Heart right ventricle (tissue), 16 donors: ENCODE measurements at regions of chr2 and their contacts with region 1.

Region 1: DNA sequence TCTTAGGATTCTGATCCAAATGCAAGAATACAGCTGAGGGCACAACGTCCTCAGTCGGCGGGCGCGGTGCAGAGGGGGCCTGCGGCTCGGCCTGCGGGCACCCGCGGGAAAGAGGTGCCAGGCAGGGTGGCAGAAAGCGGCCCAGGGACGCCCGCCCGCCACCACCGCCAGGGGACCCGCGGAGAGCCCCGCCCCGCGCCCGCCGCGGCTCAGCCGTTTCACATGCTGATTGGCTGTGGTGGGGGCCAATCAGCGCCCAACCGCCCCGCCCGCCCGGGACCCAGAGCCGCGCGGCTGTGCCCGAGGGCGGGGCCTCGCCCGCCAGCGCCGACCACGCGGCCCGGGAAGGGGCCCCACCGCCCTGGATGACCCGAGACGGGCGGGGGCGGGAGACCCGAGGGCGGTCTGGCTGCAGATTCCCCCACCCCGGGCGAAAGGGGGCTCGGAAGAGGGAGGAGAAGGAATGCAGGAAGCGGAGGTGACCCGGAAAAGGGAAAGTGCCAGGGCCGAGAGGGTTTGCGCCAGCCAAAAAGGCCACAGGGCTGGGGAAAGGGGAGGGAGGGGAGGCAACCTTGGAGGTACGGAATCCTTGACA is 8.0 kb downstream of the IRS1 start:
- DNase-seq: peak; percentile 90 to 94
- ATAC-seq: peak; percentile 84 to 95 (median 93)
- H3K4me3 ChIP-seq: peak overlapping the region; percentile 44 to 95 (median 78)
- H3K27ac ChIP-seq: peak overlapping the region; percentile 90 to 97 (median 94)
- H3K4me1 ChIP-seq: peaks cover 8 to 94% (median 87%) of the 10 kb centered on the region in 9 donors
- H3K27me3 ChIP-seq: no peaks in the 10 kb centered on the region
- CTCF ChIP-seq: peak; percentile 10 to 68 (median 53)

Region 2: DNA sequence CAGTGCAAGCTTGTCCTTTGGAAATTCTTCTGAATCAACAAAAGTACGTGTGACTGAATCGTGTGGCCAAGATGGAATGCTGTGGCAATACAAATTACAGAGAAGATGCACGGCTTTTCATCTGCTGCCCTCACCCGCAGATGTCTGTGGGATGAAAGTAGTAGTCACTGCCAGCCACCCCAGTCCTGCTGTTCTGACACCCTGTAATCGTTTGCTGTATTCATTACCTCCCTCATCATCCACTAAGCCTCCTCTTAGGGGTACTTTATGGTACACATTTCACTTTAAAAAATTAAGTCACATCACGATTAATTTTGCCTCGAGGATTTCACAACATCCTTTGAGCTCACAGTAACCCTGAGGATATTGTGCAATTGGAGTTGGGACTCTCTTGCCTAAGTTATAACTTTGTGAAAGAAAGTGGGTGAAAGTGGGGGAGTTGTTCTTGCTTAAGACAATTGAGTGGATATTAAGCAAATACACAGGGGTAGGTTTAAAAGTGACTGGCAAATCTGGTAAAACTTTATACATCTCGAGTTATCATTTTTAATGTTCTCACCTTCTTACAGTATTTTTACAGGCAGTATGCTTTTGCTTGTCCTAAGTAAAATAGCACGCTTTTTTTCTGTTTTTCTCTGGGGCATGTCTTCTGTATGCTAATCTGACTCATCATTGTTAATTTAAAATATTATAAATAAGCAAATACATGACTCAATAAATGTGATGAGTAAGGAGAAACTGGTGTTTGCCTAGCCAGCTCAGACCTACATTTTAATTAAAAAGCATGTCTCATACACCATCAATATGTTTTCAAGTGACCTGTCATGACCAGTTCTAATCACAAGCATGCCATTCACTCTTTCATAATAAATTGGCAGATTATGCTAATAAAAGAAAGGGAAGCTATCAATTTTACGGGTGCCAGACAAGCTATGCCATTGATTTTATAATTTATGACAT is 672.8 kb before region 1 on chr2:
- intact Hi-C with region 1: loop called in 2 of 10 experiments (anchors 10 kb)
- DNase-seq: no peak
- ATAC-seq: peak; percentile 52 to 86 (median 69)
- H3K4me3 ChIP-seq: peak overlapping the region in 2 of 10 donors; percentile 15 to 22
- H3K27ac ChIP-seq: peak overlapping the region in 6 of 10 donors; percentile 16 to 80 (median 44)
- H3K4me1 ChIP-seq: peaks cover 0 to 77% (median 7%) of the 10 kb centered on the region in 9 donors
- H3K27me3 ChIP-seq: no peaks in the 10 kb centered on the region
- CTCF ChIP-seq: no peak

Region 3: DNA sequence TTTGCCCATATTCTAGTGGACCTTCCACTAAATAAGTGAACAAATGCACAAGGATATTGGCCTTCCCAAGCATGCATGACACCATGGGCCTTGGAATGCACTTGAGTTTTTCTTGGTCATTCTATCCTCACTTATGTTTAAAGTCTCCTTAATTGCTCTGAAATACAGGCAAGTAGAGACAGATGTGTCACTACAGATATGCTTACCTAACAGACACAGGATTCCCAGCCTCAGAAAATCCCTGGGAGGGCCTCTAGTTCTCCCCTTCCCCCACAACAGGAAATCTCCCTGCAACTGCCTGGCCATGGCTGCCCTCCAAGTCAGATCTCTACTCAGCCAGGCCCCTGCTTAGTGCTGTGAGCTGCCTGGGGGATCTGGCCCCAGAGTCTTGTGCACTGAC is 437.1 kb before region 1 on chr2:
- intact Hi-C with region 1: no loop called
- DNase-seq: no peak
- ATAC-seq: peak in 1 of 8 donors; percentile 42
- H3K4me3 ChIP-seq: no peak overlapping the region
- H3K27ac ChIP-seq: no peak overlapping the region
- H3K4me1 ChIP-seq: peaks cover 0 to 11% (median 3%) of the 10 kb centered on the region in 9 donors
- H3K27me3 ChIP-seq: peaks cover 0 to 4% (median 0%) of the 10 kb centered on the region in 7 donors
- CTCF ChIP-seq: no peak

Region 4: GRCh38 chr2:226447338-226448295 is 344.0 kb before region 1 on chr2:
- intact Hi-C with region 1: loop called in 3 of 10 experiments (anchors 10 kb)
- DNase-seq: no peak
- ATAC-seq: no peak
- H3K4me3 ChIP-seq: no peak overlapping the region
- H3K27ac ChIP-seq: peak overlapping the region in 5 of 10 donors; percentile 15 to 65 (median 63)
- H3K4me1 ChIP-seq: peaks cover 0 to 23% (median 11%) of the 10 kb centered on the region in 9 donors
- H3K27me3 ChIP-seq: no peaks in the 10 kb centered on the region
- CTCF ChIP-seq: no peak

Region 5: DNA sequence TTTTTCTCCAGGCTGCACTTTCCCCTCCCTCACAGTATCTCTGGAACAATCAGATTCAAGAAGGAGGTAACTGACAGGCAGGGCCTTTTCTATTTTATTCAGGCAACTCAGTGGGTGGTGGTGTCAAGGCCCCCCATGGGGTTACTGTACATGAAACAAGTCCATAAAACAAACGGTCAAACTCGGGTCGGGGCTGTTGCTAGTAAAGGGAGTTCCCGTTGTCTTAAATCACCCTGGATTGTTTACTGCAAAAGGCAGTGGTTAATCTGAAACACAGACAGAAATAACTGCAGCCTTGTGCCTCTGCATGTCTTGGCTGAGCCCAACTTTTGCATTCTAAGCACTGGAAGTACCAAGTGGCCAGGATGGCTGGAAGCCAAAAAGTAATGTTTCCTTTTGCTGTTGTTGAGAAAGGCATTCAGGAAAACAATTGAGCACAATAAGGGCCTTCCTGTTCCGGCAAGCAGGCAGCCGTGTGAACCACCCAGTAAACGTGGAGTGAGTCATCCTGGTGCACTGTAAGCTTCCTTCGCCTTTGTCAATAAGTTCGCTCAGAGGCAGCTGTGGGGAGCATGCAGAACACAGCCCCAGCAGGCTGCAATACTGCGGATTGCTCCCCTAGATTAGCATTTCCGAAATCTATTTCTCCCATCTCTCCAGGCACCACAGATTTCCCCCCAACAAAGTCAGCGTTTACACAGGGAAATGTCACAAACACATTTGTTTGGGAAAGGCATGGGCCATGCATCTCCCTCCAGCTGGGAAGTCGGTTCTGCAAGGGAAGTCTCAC is 141.5 kb before region 1 on chr2:
- intact Hi-C with region 1: loop called in 5 of 10 experiments (anchors 5 to 10 kb)
- DNase-seq: peak; percentile 41 to 84
- ATAC-seq: peak; percentile 90 to 98 (median 95)
- H3K4me3 ChIP-seq: peak overlapping the region in 3 of 10 donors; percentile 3 to 24 (median 20)
- H3K27ac ChIP-seq: peak overlapping the region; percentile 41 to 89 (median 74)
- H3K4me1 ChIP-seq: peaks cover 9 to 38% (median 24%) of the 10 kb centered on the region in 9 donors
- H3K27me3 ChIP-seq: peaks cover 0 to 42% (median 6%) of the 10 kb centered on the region in 7 donors
- CTCF ChIP-seq: no peak

Region 6: DNA sequence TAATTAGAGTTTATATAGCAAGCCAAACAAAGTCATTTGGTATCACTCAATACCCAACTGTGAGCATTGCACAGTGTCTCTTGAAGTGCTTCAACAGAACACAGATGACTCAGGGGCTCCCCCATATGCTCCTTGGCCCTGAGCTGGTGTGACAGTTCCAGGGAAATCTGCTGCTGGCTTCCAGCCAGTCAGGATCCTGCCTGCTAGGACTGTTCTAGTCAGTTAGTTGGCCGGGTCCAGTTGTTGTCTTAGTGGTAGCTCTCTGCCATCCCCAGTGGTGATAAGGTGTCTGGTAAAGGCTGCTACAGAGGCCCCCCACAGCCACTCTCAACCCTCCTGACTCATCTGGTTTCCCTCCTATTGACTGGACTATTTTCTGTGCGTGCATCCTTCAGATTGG is 92.3 kb before region 1 on chr2:
- intact Hi-C with region 1: loop called in 3 of 10 experiments (anchors 10 kb)
- DNase-seq: peak; percentile 67 to 71
- ATAC-seq: peak; percentile 76 to 98 (median 92)
- H3K4me3 ChIP-seq: no peak overlapping the region
- H3K27ac ChIP-seq: no peak overlapping the region
- H3K4me1 ChIP-seq: peaks cover 0 to 17% (median 10%) of the 10 kb centered on the region in 9 donors
- H3K27me3 ChIP-seq: no peaks in the 10 kb centered on the region
- CTCF ChIP-seq: peak in 3 of 9 donors; percentile 12 to 38 (median 32)

Region 7: DNA sequence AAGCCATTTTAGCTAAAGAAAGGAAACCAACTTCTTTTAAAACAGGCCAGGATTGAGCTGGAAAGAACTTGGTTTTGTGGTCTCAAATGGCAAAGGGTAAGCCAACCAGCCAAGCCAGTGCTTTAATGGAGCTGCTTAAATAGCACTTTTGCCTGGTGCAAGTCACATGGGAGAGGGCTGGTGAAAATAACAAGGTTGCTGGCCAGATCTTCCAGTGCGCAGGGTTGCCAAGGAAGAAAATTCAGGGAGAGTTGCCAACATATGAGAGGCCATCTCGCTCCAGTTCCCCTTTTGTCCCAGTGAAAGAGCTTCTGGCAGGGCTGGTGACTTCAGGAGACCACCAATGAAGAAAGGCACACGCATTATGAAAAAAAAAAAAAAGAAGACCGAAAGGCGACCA is 49.2 kb before region 1 on chr2:
- intact Hi-C with region 1: loop called in 4 of 10 experiments (anchors 5 to 10 kb)
- DNase-seq: peak; percentile 23 to 70
- ATAC-seq: peak; percentile 82 to 93 (median 89)
- H3K4me3 ChIP-seq: no peak overlapping the region
- H3K27ac ChIP-seq: peak overlapping the region in 9 of 10 donors; percentile 43 to 78 (median 67)
- H3K4me1 ChIP-seq: peaks cover 7 to 71% (median 50%) of the 10 kb centered on the region in 9 donors
- H3K27me3 ChIP-seq: no peaks in the 10 kb centered on the region
- CTCF ChIP-seq: no peak